T-cell (primary cell): ENCODE measurements at regions of chr2 and their contacts with region 1.

Region 1: DNA sequence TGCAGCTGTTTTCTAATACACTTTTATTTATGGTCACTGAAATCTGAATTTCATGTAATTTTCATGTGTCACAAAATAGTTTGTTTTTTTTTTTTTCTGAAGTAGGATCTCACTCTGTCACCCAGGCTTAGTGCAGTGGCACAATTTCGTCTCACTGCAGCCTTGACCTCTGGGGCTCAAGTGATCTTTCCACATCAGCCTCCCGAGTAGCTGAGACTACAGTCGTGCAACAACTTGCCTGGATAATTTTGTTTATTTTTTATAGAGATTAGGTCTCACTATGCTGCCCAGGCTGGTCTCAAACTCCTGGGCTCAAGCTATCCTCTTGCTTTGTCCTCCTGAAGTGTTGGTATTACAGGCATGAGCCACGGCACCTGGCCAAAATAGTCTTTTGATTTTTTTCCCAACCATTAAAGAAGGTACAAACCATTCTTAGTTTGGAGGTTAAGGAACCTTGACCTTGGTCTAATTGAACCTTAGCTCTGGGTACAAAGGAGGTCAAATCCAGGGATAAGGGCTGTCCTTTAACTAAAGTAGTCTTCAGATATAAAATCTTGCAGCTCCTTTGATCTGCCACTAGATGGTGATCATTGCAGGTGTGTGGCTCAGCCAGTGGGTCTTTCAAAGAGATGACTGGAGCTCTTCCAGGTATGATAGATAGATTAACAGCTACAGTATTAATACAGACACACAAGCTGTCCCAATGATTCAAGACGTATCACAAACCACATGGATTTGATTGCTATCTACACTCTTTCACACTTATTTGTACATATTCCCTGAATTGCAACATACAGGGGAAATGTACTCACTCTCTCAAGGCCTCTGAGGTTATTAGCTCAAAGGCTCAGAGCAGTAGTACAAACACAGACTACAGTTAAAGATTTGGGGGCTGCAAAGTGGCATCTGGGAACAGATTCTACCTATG is 4.7 kb upstream of the KRCC1 start:
- DNase-seq: peak in 19 of 35 experiments; percentile 6 to 64 (median 19)
- ATAC-seq: peak in 1 of 4 experiments; percentile 20
- H3K4me3 ChIP-seq: no peak overlapping the region
- H3K4me3 Mint-ChIP-seq: no peak overlapping the region
- H3K27ac ChIP-seq: no peak overlapping the region
- H3K27ac Mint-ChIP-seq: no peak overlapping the region
- H3K4me1 ChIP-seq: peaks cover 7 to 9% of the 10 kb centered on the region in 2 experiments
- H3K4me1 Mint-ChIP-seq: peaks cover 15 to 29% (median 22%) of the 10 kb centered on the region in 3 donors
- H3K27me3 ChIP-seq: no peaks in the 10 kb centered on the region
- H3K27me3 Mint-ChIP-seq: no peaks in the 10 kb centered on the region

Region 2: GRCh38 chr2:86518481-86518880 is 1541.8 kb before region 1 on chr2:
- CTCF ChIA-PET with region 1: no interaction called
- POLR2A ChIA-PET with region 1: no interaction called
- DNase-seq: peak in 34 of 35 experiments; percentile 8 to 66 (median 36)
- ATAC-seq: peak; percentile 60 to 81 (median 68)
- H3K4me3 ChIP-seq: no peak overlapping the region
- H3K4me3 Mint-ChIP-seq: no peak overlapping the region
- H3K27ac ChIP-seq: no peak overlapping the region
- H3K27ac Mint-ChIP-seq: no peak overlapping the region
- H3K4me1 ChIP-seq: no peaks in the 10 kb centered on the region
- H3K4me1 Mint-ChIP-seq: peaks cover 8 to 10% (median 10%) of the 10 kb centered on the region in 3 donors
- H3K27me3 ChIP-seq: no peaks in the 10 kb centered on the region
- H3K27me3 Mint-ChIP-seq: no peaks in the 10 kb centered on the region

Region 3: DNA sequence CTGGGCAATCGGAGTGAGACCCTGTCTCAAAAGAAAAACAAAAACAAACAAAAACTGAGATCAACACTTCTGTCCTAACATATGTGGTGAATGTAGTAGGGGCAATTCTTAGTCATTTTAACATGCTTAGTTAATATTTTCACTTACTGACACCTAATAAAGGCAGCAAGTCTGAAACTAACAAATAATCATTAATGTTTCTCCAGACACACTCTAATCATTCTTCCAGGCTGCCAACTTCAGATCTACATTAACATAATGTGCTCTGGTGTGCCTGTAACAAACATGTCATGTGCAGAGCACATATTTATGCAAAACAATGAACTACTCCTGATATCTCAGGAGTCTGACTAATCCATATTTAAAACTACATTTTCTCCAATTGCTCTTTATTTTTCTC is 10.6 kb before region 1 on chr2:
- CTCF ChIA-PET with region 1: interaction called, 3 to 16 read pairs
- POLR2A ChIA-PET with region 1: interaction called in 1 of 2 experiments, 6 read pairs
- DNase-seq: no peak
- ATAC-seq: no peak
- H3K4me3 ChIP-seq: no peak overlapping the region
- H3K4me3 Mint-ChIP-seq: no peak overlapping the region
- H3K27ac ChIP-seq: no peak overlapping the region
- H3K27ac Mint-ChIP-seq: peak overlapping the region in 1 of 2 donors; percentile 29
- H3K4me1 ChIP-seq: peaks cover 7% of the 10 kb centered on the region in 2 experiments
- H3K4me1 Mint-ChIP-seq: peaks cover 49 to 58% (median 54%) of the 10 kb centered on the region in 3 donors
- H3K27me3 ChIP-seq: no peaks in the 10 kb centered on the region
- H3K27me3 Mint-ChIP-seq: no peaks in the 10 kb centered on the region

Region 4: DNA sequence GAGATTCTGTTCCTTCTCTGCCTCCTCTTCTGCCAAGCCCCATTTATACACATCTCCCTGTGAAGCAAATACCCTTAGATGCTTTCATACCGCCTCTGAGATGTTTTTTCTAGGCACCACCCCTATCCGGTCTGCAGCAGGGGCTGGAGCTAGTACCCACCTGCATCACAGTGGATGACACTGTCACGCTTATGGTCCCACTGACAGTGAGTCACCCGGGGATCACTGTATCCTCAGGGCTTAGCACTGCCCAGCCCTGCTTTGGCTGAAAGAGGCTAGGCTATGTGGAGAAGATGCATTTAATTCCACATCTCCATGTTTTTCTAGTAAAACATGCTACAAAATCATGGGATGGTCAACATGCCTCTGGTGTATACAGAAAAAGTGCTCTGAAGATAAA is 57.7 kb after region 1 on chr2:
- CTCF ChIA-PET with region 1: no interaction called
- POLR2A ChIA-PET with region 1: no interaction called
- DNase-seq: no peak
- ATAC-seq: no peak
- H3K4me3 ChIP-seq: no peak overlapping the region
- H3K4me3 Mint-ChIP-seq: no peak overlapping the region
- H3K27ac ChIP-seq: no peak overlapping the region
- H3K27ac Mint-ChIP-seq: no peak overlapping the region
- H3K4me1 ChIP-seq: no peaks in the 10 kb centered on the region
- H3K4me1 Mint-ChIP-seq: no peaks in the 10 kb centered on the region
- H3K27me3 ChIP-seq: peaks cover 0 to 10% of the 10 kb centered on the region in 2 experiments
- H3K27me3 Mint-ChIP-seq: peaks cover 6 to 7% of the 10 kb centered on the region in 2 donors

Region 5: GRCh38 chr2:88159955-88160415 is 99.7 kb after region 1 on chr2:
- CTCF ChIA-PET with region 1: interaction called, 17 to 39 read pairs
- POLR2A ChIA-PET with region 1: no interaction called
- DNase-seq: peak in 29 of 35 experiments; percentile 11 to 75 (median 40)
- ATAC-seq: peak in 3 of 4 experiments; percentile 35 to 57 (median 37)
- H3K4me3 ChIP-seq: no peak overlapping the region
- H3K4me3 Mint-ChIP-seq: no peak overlapping the region
- H3K27ac ChIP-seq: no peak overlapping the region
- H3K27ac Mint-ChIP-seq: no peak overlapping the region
- H3K4me1 ChIP-seq: no peaks in the 10 kb centered on the region
- H3K4me1 Mint-ChIP-seq: no peaks in the 10 kb centered on the region
- H3K27me3 ChIP-seq: no peaks in the 10 kb centered on the region
- H3K27me3 Mint-ChIP-seq: no peaks in the 10 kb centered on the region